GM13977 (cell line): ENCODE measurements at regions of chrX and their contacts with region 1.

Region 1: DNA sequence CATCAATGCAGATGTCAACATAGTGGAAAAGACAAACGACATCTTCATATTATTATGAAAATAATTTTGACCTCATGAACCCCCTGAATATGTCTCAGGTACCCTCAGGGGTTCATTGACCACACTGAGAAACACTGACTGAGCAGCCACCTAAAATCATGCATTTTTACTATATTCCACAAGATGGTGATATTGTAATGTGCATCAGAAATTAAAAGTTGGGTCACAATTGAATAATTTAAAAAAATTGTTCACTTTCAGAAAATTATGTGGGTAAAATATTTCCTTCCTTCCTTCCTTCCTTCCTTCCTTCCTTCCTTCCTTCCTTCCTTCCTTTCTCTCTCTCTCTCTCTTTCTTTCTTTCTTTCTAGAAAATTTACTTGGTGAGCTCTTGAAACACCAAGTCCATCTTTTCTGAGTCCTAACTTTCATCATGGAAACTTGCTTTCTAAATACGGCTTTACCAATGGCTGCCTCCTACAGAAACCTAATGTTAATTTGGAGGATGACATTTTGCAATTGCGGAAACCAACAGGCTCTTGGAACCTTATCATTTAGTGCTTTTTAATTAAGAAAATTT is 103.6 kb downstream of the RTL3 start:
- DNase-seq: peak; percentile 8
- CTCF ChIP-seq: peak; percentile 55

Region 2: DNA sequence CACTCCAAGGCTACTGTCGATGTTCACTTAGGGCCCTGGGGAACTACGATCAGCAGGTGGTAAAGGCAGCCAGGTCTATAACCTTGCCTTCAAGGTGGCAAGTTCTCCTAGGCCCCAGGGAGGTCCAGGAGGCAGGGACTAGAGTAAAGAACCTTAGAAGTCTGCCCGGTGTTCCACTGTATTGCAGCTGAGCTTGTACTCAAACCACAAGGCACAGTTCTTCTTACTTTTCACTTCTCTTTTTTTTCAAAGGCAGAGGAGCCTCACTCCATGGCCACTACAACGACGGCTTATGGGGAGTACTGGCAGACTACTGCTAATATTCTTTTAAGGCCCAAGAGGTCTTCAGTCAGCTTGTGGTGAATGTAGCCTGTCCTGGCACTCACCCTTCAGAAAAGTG is 510.2 kb after region 1 on chrX:
- in situ Hi-C with region 1: loop called (anchors 25 kb)
- DNase-seq: no peak
- CTCF ChIP-seq: no peak